ENCODE measurements at regions of chr5 and their contacts with region 1.

Region 1: DNA sequence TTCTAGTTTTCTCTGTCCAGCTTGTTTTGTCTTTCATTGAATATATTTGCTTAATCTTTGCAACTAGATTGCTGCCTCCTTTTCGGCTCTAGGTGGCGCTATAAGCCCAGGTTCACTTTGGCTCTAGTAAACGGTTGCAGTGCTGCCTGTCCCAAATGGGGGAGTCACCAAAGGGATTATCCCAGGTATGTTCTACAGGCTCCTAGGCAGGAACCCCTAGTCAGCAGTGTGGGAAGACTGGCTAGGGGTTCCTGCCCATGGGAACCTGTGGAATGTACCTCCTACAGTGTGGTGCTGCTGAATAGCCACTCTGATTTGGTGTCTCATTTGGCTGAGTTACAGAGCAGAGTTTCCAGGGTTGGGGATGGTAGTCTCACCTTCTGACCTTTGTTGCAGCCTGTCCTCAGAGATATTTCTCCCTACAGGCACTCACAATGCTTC is 85.2 kb downstream of the ARSB start:
- DNase-seq: no peak
- ATAC-seq: peak in 2 of 4 donors; percentile 45 to 60
- H3K4me3 ChIP-seq: no peak overlapping the region
- H3K27ac ChIP-seq: no peak overlapping the region
- H3K4me1 ChIP-seq: no peaks in the 10 kb centered on the region
- H3K27me3 ChIP-seq: no peaks in the 10 kb centered on the region
- CTCF ChIP-seq: peak; percentile 61

Region 2: GRCh38 chr5:78677777-78678668 is 221.9 kb before region 1 on chr5:
- intact Hi-C with region 1: no loop called
- DNase-seq: peak; percentile 65 to 76
- ATAC-seq: peak; percentile 44 to 76 (median 63)
- H3K4me3 ChIP-seq: no peak overlapping the region
- H3K27ac ChIP-seq: peak overlapping the region; percentile 56
- H3K4me1 ChIP-seq: no peaks in the 10 kb centered on the region
- H3K27me3 ChIP-seq: no peaks in the 10 kb centered on the region
- CTCF ChIP-seq: no peak

Region 3: GRCh38 chr5:78964887-78965286 is 64.9 kb after region 1 on chr5:
- intact Hi-C with region 1: loop called (anchors 5 kb)
- DNase-seq: no peak
- ATAC-seq: peak; percentile 68 to 83 (median 82)
- H3K4me3 ChIP-seq: no peak overlapping the region
- H3K27ac ChIP-seq: no peak overlapping the region
- H3K4me1 ChIP-seq: no peaks in the 10 kb centered on the region
- H3K27me3 ChIP-seq: no peaks in the 10 kb centered on the region
- CTCF ChIP-seq: peak; percentile 64

Region 4: GRCh38 chr5:79191457-79191856 is 291.5 kb after region 1 on chr5:
- intact Hi-C with region 1: no loop called
- DNase-seq: no peak
- ATAC-seq: no peak
- H3K4me3 ChIP-seq: no peak overlapping the region
- H3K27ac ChIP-seq: no peak overlapping the region
- H3K4me1 ChIP-seq: no peaks in the 10 kb centered on the region
- H3K27me3 ChIP-seq: no peaks in the 10 kb centered on the region
- CTCF ChIP-seq: no peak

Region 5: DNA sequence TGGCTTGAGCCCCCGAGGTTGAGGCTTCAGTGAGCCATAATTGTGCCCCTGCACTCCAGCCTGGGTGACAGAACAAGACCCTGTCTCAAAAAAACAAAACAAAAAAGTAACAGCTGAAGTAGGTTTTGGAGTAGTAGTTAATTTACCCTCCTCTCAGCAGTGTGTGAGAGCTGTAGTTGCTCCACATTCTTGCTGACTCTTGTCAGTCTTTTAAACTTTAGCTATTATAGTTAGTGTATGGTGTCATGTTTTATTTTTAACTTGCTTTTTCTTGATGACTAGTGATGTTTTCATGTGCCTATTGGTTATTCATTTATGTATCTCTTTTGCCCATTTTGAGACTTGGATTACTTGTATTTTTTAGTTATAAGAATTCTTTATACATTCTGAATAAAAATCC is 1807.7 kb after region 1 on chr5:
- intact Hi-C with region 1: no loop called
- DNase-seq: no peak
- ATAC-seq: peak; percentile 80 to 96 (median 88)
- H3K4me3 ChIP-seq: no peak overlapping the region
- H3K27ac ChIP-seq: peak overlapping the region; percentile 48
- H3K4me1 ChIP-seq: peaks cover 9% of the 10 kb centered on the region
- H3K27me3 ChIP-seq: no peaks in the 10 kb centered on the region
- CTCF ChIP-seq: no peak

Measured in psoas muscle (tissue), 8 donors.